CD4-positive, alpha-beta memory T cell (primary cell): ENCODE measurements at regions of chr22 and their contacts with region 1.

Region 1: GRCh38 chr22:40950962-40951794 is at the start of gene RBX1:
- DNase-seq: peak; percentile 99 to 100 (median 99)
- H3K4me3 ChIP-seq: peak within 1 kb of the TSS; percentile 86 to 92
- H3K4me3 Mint-ChIP-seq: peak within 1 kb of the TSS; percentile 96 to 100 (median 99)
- H3K27ac ChIP-seq: peak within 1 kb of the TSS; percentile 98
- H3K27ac Mint-ChIP-seq: peak within 1 kb of the TSS; percentile 97 to 100 (median 100)
- H3K4me1 ChIP-seq: peaks cover 33% of the 10 kb centered on the region
- H3K4me1 Mint-ChIP-seq: peaks cover 17 to 36% (median 30%) of the 10 kb centered on the region in 4 donors
- H3K27me3 ChIP-seq: no peaks in the 10 kb centered on the region
- H3K27me3 Mint-ChIP-seq: peaks cover 0 to 5% of the 10 kb centered on the region in 2 donors
- total RNA-seq, gene RBX1: 39.6 to 46.4 TPM

Region 2: DNA sequence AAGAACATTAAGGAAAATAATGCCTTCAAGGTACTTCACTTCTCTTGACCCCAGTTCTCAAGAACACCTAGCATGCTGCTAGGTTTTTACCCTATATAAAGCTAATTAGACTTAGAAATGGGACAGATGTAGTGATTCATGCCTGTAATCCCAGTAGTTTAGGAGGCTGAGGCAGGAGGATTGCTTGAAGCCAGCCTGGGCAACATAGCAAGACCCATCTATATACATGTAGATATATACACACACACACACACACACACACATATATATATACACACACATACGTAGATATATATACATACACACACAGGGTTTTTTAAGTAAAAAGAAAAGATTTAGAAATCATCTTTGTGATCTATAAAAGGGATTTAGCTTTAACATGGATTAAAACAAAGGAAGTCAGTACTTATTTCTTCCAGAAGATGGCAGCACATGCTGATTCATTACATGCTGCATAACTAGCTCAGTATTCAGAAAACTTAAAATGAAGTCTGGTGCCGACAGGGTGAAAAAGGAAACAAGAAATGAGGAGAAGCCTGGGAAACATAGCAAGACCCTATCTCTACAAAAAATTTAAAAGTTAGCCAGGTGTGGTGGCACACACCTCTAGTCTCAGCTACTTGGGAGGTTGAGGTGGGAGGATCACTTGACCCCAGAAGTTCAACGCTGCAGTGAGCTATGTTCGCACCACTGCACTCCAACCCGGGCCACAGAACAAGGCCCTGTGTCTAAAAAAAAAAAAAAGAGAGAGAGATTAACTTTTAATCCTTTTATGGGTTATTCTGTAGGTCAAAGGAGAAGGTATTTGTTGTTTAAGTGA is 28.5 kb before region 1 on chr22:
- CTCF ChIA-PET with region 1: interaction called, 19 read pairs
- POLR2A ChIA-PET with region 1: interaction called, 24 read pairs
- intact Hi-C with region 1: loop called (anchors 1 kb)
- DNase-seq: peak in 4 of 5 donors; percentile 63 to 72 (median 66)
- H3K4me3 ChIP-seq: no peak overlapping the region
- H3K4me3 Mint-ChIP-seq: peak overlapping the region; percentile 22 to 64 (median 44)
- H3K27ac ChIP-seq: no peak overlapping the region
- H3K27ac Mint-ChIP-seq: peak overlapping the region in 6 of 7 donors; percentile 48 to 84 (median 74)
- H3K4me1 ChIP-seq: peaks cover 4% of the 10 kb centered on the region
- H3K4me1 Mint-ChIP-seq: peaks cover 4 to 6% (median 5%) of the 10 kb centered on the region in 4 donors
- H3K27me3 ChIP-seq: no peaks in the 10 kb centered on the region
- H3K27me3 Mint-ChIP-seq: no peaks in the 10 kb centered on the region

Region 3: DNA sequence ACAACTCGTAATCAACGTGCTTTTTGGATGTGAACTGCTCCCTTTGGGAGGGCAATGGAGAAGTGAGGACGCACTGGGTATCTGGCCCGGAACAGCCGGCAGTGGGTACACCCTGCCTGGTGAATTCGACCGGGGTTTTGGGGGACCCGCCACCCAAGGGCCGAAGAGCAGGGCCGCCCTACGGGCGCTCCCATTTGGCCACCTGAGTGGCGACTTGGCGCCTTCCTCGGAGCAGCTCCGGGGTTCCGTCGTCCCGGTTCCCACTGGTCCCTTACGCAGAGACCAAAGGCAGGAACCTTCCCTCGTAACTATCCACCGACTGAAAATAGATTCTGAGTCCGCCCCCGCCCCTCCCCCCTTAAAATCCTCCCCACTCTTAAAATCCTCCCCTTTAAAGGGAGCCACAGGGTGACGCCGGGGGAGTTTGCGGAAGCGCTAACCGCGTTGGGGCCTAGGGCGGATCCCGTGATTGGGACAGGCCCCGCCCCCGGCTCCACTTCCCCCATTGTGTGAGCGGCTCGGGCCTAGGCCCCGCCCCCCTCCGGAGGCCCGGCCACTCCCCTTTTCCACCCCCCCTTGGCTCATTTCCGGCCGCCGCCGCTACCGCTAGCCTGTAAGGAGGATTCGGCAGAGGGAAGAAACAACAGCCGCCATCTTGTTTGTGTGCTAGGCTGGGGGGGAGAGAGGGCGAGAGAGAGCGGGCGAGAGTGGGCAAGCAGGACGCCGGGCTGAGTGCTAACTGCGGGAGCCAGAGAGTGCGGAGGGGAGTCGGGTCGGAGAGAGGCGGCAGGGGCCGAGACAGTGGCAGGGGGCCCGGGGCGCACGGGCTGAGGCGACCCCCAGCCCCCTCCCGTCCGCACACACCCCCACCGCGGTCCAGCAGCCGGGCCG is 140.2 kb after region 1 on chr22:
- CTCF ChIA-PET with region 1: interaction called, 8 read pairs
- POLR2A ChIA-PET with region 1: interaction called, 211 read pairs
- intact Hi-C with region 1: loop called (anchors 1 kb)
- DNase-seq: peak; percentile 98 to 99 (median 99)
- H3K4me3 ChIP-seq: peak overlapping the region; percentile 79 to 93
- H3K4me3 Mint-ChIP-seq: peak overlapping the region; percentile 93 to 100 (median 98)
- H3K27ac ChIP-seq: peak overlapping the region; percentile 99
- H3K27ac Mint-ChIP-seq: peak overlapping the region; percentile 97 to 100 (median 99)
- H3K4me1 ChIP-seq: peaks cover 27% of the 10 kb centered on the region
- H3K4me1 Mint-ChIP-seq: peaks cover 20 to 44% (median 27%) of the 10 kb centered on the region in 4 donors
- H3K27me3 ChIP-seq: no peaks in the 10 kb centered on the region
- H3K27me3 Mint-ChIP-seq: no peaks in the 10 kb centered on the region

Region 4: GRCh38 chr22:41237707-41238569 is 286.8 kb after region 1 on chr22:
- CTCF ChIA-PET with region 1: no interaction called
- POLR2A ChIA-PET with region 1: interaction called, 14 read pairs
- intact Hi-C with region 1: no loop called
- DNase-seq: peak; percentile 81 to 84 (median 82)
- H3K4me3 ChIP-seq: peak overlapping the region in 1 of 2 donors; percentile 12
- H3K4me3 Mint-ChIP-seq: peak overlapping the region in 6 of 8 donors; percentile 15 to 82 (median 67)
- H3K27ac ChIP-seq: no peak overlapping the region
- H3K27ac Mint-ChIP-seq: peak overlapping the region in 1 of 7 donors; percentile 70
- H3K4me1 ChIP-seq: peaks cover 13% of the 10 kb centered on the region
- H3K4me1 Mint-ChIP-seq: peaks cover 4 to 14% (median 6%) of the 10 kb centered on the region in 4 donors
- H3K27me3 ChIP-seq: no peaks in the 10 kb centered on the region
- H3K27me3 Mint-ChIP-seq: no peaks in the 10 kb centered on the region

Region 5: GRCh38 chr22:41448189-41448808 is 497.1 kb after region 1 on chr22:
- CTCF ChIA-PET with region 1: no interaction called
- POLR2A ChIA-PET with region 1: interaction called, 6 read pairs
- intact Hi-C with region 1: loop called (anchors 5 kb)
- DNase-seq: peak; percentile 91 to 97 (median 93)
- H3K4me3 ChIP-seq: peak overlapping the region; percentile 71 to 94
- H3K4me3 Mint-ChIP-seq: peak overlapping the region; percentile 90 to 98 (median 96)
- H3K27ac ChIP-seq: peak overlapping the region; percentile 87
- H3K27ac Mint-ChIP-seq: peak overlapping the region; percentile 94 to 99 (median 98)
- H3K4me1 ChIP-seq: peaks cover 11% of the 10 kb centered on the region
- H3K4me1 Mint-ChIP-seq: peaks cover 12 to 46% (median 19%) of the 10 kb centered on the region in 4 donors
- H3K27me3 ChIP-seq: no peaks in the 10 kb centered on the region
- H3K27me3 Mint-ChIP-seq: peaks cover 0 to 2% of the 10 kb centered on the region in 2 donors